ENCODE measurements at regions of chr3 and their contacts with region 1.

Region 1: DNA sequence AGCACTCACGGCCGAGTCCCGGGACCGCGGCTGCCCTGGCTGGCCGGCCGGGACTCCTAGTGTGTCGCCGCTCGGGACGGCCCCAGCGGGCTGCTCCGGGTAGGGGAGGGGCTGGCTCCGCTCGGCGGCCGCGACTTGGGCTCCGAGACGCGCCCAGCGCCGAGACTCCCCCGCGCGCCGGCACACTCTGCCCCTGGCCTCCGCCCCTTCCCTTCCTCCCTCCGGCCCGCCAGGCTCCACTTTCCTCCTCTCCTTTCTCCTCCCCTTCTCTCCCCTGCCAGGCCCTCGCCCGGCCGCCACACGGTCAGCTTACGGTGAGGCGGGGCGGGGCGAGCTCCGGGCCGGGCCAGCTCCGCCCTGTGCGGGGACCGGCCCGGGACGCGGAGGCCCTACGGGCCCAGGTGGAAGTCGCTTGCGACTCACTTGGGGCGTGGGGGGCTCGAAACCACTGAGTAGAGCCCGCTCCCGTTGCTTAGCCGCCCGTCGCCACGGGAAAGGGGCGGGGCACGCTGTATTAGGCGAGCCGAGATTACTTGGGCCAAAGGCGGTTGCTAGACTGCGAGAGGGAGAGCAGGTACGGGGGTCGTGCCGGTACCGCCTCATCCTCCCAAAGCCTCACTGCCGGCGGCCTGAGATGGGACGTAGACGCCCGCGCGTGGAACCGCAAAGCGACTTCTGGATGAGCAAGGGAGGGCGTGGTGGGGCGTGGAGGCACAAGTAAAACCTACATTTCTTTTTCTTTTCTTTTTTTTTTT is at the start of gene ITGB5:
- DNase-seq: peak; percentile 47 to 92
- H3K4me3 ChIP-seq: peak within 1 kb of the TSS; percentile 85 to 90
- H3K27ac ChIP-seq: peak within 1 kb of the TSS; percentile 97 to 98
- H3K4me1 ChIP-seq: peaks cover 18 to 28% of the 10 kb centered on the region in 2 donors
- H3K27me3 ChIP-seq: no peaks in the 10 kb centered on the region
- CTCF ChIP-seq: no peak
- total RNA-seq, gene ITGB5: 595 TPM

Region 2: DNA sequence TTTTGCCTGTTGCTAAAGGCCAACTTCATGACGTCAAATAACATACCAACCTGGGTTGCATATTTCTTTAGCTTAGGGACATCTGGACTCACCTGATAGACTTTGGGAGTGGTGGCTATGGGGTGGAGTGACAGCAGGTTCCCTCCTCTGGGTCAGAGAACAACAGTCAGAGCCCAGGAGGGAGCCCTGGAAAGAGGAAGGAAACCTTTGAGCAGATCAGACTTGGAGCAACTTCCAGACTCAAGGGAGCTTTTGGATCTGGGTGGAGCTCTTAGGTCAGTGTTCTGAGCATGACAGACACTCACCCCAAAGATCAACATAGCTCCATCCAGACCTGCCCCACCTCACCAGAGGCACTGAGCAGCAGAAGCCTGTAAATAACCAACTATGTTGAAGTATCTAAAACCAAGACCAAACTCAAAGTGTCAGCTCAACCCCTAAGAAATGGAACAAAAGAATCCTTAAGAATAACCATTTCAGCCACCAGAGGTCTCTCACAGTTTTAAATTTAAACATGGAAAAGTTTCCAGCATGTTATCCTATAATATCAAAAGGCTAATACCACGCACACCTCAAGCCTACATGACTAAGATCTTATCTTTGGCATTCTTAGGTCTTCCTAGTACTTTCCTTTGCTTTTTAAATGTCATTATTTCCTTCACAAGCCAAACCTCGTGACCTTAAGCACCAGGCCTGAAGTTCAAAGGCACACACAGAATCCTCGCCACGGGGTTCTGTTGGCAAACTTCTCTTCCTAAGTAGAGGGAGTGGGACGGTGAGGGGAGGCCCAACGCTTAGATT is 100.7 kb before region 1 on chr3:
- intact Hi-C with region 1: loop called (anchors 2 kb)
- DNase-seq: no peak
- H3K4me3 ChIP-seq: peak overlapping the region in 1 of 2 donors; percentile 11
- H3K27ac ChIP-seq: peak overlapping the region; percentile 53 to 90
- H3K4me1 ChIP-seq: peaks cover 19 to 67% of the 10 kb centered on the region in 2 donors
- H3K27me3 ChIP-seq: no peaks in the 10 kb centered on the region
- CTCF ChIP-seq: peak; percentile 32 to 54 (median 40)

Region 3: DNA sequence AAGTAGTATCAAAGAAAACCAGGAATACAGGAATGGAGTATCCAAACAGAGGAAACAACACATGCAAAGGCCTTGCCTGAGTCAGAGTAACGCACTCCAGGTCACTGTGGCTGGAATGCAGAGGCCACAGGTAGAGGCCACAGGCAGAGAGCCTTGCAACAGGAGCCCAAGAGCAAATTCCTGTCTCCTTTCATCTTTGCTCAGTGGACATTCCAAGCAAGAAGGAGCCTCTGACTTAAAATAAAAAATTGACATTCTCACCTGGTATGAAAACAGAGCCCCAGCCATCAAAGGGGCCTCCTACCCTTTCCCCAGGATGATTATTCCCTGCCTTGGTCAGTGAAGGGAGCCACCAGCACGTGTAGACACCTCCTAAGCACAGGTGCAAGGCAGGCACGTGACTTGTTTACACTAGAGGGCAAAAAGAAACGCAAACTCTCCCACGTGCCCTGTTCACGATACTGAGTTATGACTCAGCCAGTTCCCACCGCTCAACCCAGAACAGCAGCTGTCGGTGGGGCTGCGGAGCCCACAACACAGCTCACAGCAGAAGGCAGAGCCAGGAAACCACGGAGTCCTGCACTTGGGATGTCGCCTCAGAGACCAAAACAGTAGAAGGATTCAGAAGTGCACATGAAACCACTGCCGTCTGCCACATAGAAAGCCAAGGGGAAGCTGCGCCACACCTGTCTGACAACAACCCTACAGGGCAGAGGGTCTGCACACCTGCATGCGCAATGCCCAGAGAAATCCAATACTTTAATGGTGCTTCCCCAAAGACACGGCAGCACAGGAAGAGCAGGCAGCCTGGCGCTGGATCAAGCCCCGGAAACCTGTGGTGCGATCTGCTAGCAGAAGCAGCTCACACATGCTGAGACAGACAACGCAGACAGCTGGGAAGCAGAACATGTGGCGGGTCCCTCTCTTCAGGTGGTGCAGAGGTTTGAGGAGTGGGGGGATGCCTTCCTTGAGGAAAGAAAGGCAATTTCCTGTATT is 52.3 kb before region 1 on chr3:
- intact Hi-C with region 1: loop called (anchors 2 kb)
- DNase-seq: peak; percentile 63 to 81
- H3K4me3 ChIP-seq: no peak overlapping the region
- H3K27ac ChIP-seq: peak overlapping the region; percentile 85 to 89
- H3K4me1 ChIP-seq: peaks cover 21 to 91% of the 10 kb centered on the region in 2 donors
- H3K27me3 ChIP-seq: no peaks in the 10 kb centered on the region
- CTCF ChIP-seq: no peak

Region 4: GRCh38 chr3:124851905-124852304 is 35.4 kb before region 1 on chr3:
- intact Hi-C with region 1: loop called (anchors 2 kb)
- DNase-seq: peak in 1 of 2 donors; percentile 54
- H3K4me3 ChIP-seq: peak overlapping the region in 1 of 2 donors; percentile 42
- H3K27ac ChIP-seq: peak overlapping the region; percentile 82 to 86
- H3K4me1 ChIP-seq: peaks cover 6 to 41% of the 10 kb centered on the region in 2 donors
- H3K27me3 ChIP-seq: no peaks in the 10 kb centered on the region
- CTCF ChIP-seq: no peak

Region 5: GRCh38 chr3:124976383-124976782 is 89.0 kb after region 1 on chr3:
- intact Hi-C with region 1: no loop called
- DNase-seq: no peak
- H3K4me3 ChIP-seq: no peak overlapping the region
- H3K27ac ChIP-seq: no peak overlapping the region
- H3K4me1 ChIP-seq: no peaks in the 10 kb centered on the region
- H3K27me3 ChIP-seq: no peaks in the 10 kb centered on the region
- CTCF ChIP-seq: no peak

Region 6: GRCh38 chr3:125072301-125072700 is 184.9 kb after region 1 on chr3:
- intact Hi-C with region 1: no loop called
- DNase-seq: no peak
- H3K4me3 ChIP-seq: no peak overlapping the region
- H3K27ac ChIP-seq: no peak overlapping the region
- H3K4me1 ChIP-seq: no peaks in the 10 kb centered on the region
- H3K27me3 ChIP-seq: no peaks in the 10 kb centered on the region
- CTCF ChIP-seq: no peak

Measured in ascending aorta (tissue), 2 donors.